OCI-LY7 (cell line): ENCODE measurements at regions of chr9 and their contacts with region 1.

Region 1: GRCh38 chr9:22446950-22447617 is 460 bp downstream of the DMRTA1 start:
- DNase-seq: no peak
- H3K4me3 ChIP-seq: no peak overlapping the region
- H3K27ac ChIP-seq: no peak overlapping the region
- H3K4me1 ChIP-seq: no peaks in the 10 kb centered on the region
- CTCF ChIP-seq: no peak

Region 2: GRCh38 chr9:23408874-23409273 is 961.8 kb after region 1 on chr9:
- CTCF ChIA-PET with region 1: no interaction called
- POLR2A ChIA-PET with region 1: no interaction called
- intact Hi-C with region 1: loop called (anchors 10 kb)
- DNase-seq: no peak
- H3K4me3 ChIP-seq: no peak overlapping the region
- H3K27ac ChIP-seq: no peak overlapping the region
- H3K4me1 ChIP-seq: no peaks in the 10 kb centered on the region
- CTCF ChIP-seq: no peak